Calu3 (cell line): ENCODE measurements at regions of chr6 and their contacts with region 1.

Region 1: DNA sequence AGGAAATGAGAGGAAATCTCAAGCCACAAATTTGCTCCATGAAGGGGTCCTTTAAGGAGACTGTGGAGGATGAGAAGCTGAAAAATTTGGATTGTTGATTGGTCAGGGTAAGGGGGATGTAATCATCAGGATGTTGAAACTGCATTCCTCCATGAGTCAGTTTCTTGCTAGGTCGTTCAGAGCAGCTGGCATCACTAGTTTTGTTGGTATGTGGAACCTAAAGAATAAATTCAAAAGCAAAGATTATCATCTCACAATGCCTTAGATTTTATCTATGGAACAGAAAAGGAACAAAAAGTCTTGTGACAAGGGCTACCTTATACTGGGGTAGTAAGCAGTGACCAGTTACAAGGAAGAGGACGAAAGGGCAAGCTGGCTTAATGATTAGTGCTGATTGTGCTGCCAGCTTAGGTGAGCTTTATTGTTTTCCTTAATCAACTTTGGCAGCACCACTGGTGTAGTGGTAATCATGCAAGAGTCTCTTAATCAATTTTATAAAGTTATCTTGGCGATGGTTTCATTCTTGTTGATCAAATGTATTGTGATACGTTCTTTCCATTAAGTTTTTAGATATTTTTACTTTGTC is 36.6 kb downstream of the CRISP2 start:
- DNase-seq: peak; percentile 42
- H3K4me3 Mint-ChIP-seq: peak overlapping the region; percentile 32
- H3K27ac Mint-ChIP-seq: peak overlapping the region; percentile 80
- H3K4me1 Mint-ChIP-seq: peaks cover 29% of the 10 kb centered on the region
- H3K27me3 Mint-ChIP-seq: no peaks in the 10 kb centered on the region
- CTCF ChIP-seq: no peak

Region 2: GRCh38 chr6:49233483-49233882 is 443.3 kb before region 1 on chr6:
- CTCF ChIA-PET with region 1: no interaction called
- intact Hi-C with region 1: no loop called
- DNase-seq: no peak
- H3K4me3 Mint-ChIP-seq: no peak overlapping the region
- H3K27ac Mint-ChIP-seq: no peak overlapping the region
- H3K4me1 Mint-ChIP-seq: no peaks in the 10 kb centered on the region
- H3K27me3 Mint-ChIP-seq: no peaks in the 10 kb centered on the region
- CTCF ChIP-seq: no peak

Region 3: GRCh38 chr6:49721297-49721696 is 44.5 kb after region 1 on chr6:
- CTCF ChIA-PET with region 1: no interaction called
- intact Hi-C with region 1: no loop called
- DNase-seq: no peak
- H3K4me3 Mint-ChIP-seq: no peak overlapping the region
- H3K27ac Mint-ChIP-seq: no peak overlapping the region
- H3K4me1 Mint-ChIP-seq: no peaks in the 10 kb centered on the region
- H3K27me3 Mint-ChIP-seq: no peaks in the 10 kb centered on the region
- CTCF ChIP-seq: no peak

Region 4: DNA sequence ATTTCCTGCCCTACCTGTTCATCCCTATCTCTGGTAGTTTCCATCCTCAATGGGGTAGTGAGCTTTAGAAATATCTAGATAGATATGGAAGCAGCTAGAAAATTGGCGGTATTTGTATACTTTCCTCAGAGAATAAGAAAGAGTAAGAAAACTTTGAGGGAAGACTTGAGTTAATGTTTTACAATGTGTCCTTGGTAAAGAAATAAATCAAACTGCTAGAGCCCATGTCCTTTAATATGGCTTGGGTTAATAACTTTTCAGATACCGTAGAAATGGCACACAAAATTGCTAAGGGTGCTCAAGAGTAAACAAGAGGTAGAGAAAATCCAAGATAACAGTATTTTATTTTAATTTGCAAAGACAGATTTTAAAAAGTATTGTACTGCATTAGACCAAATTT is 138.4 kb after region 1 on chr6:
- CTCF ChIA-PET with region 1: no interaction called
- intact Hi-C with region 1: no loop called
- DNase-seq: no peak
- H3K4me3 Mint-ChIP-seq: no peak overlapping the region
- H3K27ac Mint-ChIP-seq: no peak overlapping the region
- H3K4me1 Mint-ChIP-seq: no peaks in the 10 kb centered on the region
- H3K27me3 Mint-ChIP-seq: no peaks in the 10 kb centered on the region
- CTCF ChIP-seq: no peak

Region 5: GRCh38 chr6:49841424-49841823 is 164.6 kb after region 1 on chr6:
- CTCF ChIA-PET with region 1: no interaction called
- intact Hi-C with region 1: loop called (anchors 5 kb)
- DNase-seq: no peak
- H3K4me3 Mint-ChIP-seq: no peak overlapping the region
- H3K27ac Mint-ChIP-seq: no peak overlapping the region
- H3K4me1 Mint-ChIP-seq: no peaks in the 10 kb centered on the region
- H3K27me3 Mint-ChIP-seq: no peaks in the 10 kb centered on the region
- CTCF ChIP-seq: no peak